ENCODE measurements at regions of chr1 and their contacts with region 1.

Region 1: GRCh38 chr1:230066466-230067404 is at the start of gene GALNT2:
- DNase-seq: peak; percentile 92 to 94 (median 93)
- ATAC-seq: peak; percentile 88 to 98 (median 94)
- H3K4me3 ChIP-seq: peak within 1 kb of the TSS; percentile 63 to 97 (median 84)
- H3K27ac ChIP-seq: peak within 1 kb of the TSS; percentile 79 to 92 (median 88)
- H3K4me1 ChIP-seq: peaks cover 0 to 48% (median 22%) of the 10 kb centered on the region in 12 donors
- H3K27me3 ChIP-seq: no peaks in the 10 kb centered on the region
- CTCF ChIP-seq: no peak
- POLR2A ChIP-seq: peak; percentile 57 to 80
- total RNA-seq, gene GALNT2: 21.0 to 44.9 (median 31.6) TPM

Region 2: GRCh38 chr1:229848752-229849677 is 217.7 kb before region 1 on chr1:
- intact Hi-C with region 1: loop called in 2 of 10 experiments (anchors 5 to 10 kb)
- DNase-seq: no peak
- ATAC-seq: no peak
- H3K4me3 ChIP-seq: no peak overlapping the region
- H3K27ac ChIP-seq: no peak overlapping the region
- H3K4me1 ChIP-seq: peaks cover 0 to 11% (median 3%) of the 10 kb centered on the region in 12 donors
- H3K27me3 ChIP-seq: no peaks in the 10 kb centered on the region
- CTCF ChIP-seq: peak in 11 of 12 donors; percentile 18 to 52 (median 35)
- POLR2A ChIP-seq: no peak

Region 3: DNA sequence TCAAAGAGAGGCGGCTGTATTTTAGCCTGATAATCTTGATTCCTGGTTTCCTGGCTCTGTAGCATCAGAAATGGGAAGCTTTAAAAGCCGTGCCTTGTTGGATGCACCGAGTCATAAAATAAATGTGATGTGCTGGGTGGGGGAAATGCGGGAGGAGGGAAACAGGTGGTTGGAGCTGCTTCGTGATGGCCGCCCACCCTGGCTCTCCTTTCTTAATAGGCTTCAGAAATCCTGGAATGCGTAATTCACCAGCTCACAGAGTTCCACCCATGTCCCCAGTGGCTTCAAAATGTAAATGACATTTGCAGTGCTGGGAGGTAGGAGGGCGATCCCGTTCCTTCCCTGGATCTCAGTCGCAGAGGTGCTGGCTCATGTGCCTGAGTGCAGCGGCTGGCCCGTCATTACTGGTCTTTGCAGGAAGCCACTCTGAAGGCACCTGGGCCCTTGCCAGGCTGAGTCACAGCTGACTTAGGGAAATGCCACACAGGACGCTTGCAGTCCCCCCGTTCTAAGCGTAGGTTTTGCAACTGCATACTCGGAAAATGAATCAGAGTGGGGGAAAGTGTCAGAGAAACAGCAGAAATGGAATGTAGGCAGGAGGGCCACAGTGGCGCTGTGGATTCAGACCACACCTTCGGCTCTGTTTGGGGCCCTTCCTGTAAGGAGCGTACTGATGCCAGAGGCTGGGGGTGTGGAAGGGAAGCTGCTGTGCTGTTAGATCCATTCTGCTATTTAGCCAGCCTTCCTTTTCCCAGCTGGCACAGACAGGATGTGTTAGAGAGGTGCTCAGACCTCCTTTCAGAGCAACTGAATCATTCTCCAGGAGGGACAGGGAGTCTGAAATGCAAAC is 37.9 kb after region 1 on chr1:
- intact Hi-C with region 1: loop called in 1 of 10 experiments (anchors 2 kb)
- DNase-seq: peak; percentile 82 to 98 (median 94)
- ATAC-seq: peak; percentile 72 to 96 (median 94)
- H3K4me3 ChIP-seq: peak overlapping the region in 9 of 12 donors; percentile 2 to 35 (median 16)
- H3K27ac ChIP-seq: peak overlapping the region in 10 of 12 donors; percentile 4 to 80 (median 42)
- H3K4me1 ChIP-seq: peaks cover 0 to 69% (median 38%) of the 10 kb centered on the region in 12 donors
- H3K27me3 ChIP-seq: no peaks in the 10 kb centered on the region
- CTCF ChIP-seq: peak in 1 of 12 donors; percentile 8
- POLR2A ChIP-seq: peak in 1 of 2 donors; percentile 7

Region 4: DNA sequence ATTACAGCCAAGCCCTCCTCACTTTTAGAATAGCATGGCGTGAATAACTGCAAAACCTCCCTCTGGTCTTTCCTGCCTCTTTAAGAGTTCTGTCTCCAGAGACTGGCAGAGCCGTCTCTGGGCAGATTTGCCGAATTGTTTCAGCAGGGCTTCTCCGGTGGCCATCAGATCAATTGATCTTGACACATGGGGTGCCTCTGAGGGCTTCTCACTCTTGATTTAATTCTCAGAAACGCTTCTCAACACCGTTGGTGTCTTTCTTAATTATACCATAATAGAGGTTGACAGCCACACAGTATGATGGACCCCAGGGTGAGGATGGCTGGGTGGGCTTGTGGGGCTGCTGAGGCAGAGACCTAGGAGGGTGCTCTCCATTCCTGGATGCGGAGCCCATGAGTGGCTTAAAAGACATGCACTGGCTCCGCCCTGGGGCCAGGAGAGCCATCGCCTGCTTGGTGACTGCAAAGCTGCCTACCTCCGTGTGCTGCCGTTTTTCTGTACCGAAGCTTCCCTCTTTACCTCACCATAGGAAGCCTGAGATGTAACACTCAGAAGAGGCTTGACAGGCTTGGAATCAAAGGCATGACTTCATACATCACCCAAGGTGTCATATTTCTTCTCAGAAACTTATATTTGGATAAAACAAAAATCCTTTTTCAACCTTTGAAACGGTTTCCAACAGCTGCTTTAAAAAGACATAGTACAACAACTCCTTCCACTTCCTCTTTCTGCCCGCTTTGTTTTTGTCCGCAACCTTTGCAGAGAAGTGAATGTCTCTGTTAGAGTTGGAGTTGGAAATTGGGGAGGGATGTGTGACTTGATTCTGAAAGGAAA is 83.2 kb after region 1 on chr1:
- intact Hi-C with region 1: loop called in 1 of 10 experiments (anchors 5 kb)
- DNase-seq: no peak
- ATAC-seq: no peak
- H3K4me3 ChIP-seq: peak overlapping the region in 2 of 12 donors; percentile 21 to 29
- H3K27ac ChIP-seq: peak overlapping the region in 2 of 12 donors; percentile 21 to 34
- H3K4me1 ChIP-seq: peaks cover 0 to 80% (median 50%) of the 10 kb centered on the region in 12 donors
- H3K27me3 ChIP-seq: no peaks in the 10 kb centered on the region
- CTCF ChIP-seq: no peak
- POLR2A ChIP-seq: no peak

Region 5: GRCh38 chr1:230167419-230167852 is 100.7 kb after region 1 on chr1:
- intact Hi-C with region 1: loop called in 2 of 10 experiments (anchors 5 to 10 kb)
- DNase-seq: peak in 1 of 5 donors; percentile 7
- ATAC-seq: peak in 3 of 4 donors; percentile 21 to 58 (median 38)
- H3K4me3 ChIP-seq: no peak overlapping the region
- H3K27ac ChIP-seq: no peak overlapping the region
- H3K4me1 ChIP-seq: peaks cover 0 to 50% (median 12%) of the 10 kb centered on the region in 12 donors
- H3K27me3 ChIP-seq: no peaks in the 10 kb centered on the region
- CTCF ChIP-seq: peak; percentile 52 to 76 (median 56)
- POLR2A ChIP-seq: no peak